Naive thymus-derived CD4-positive, alpha-beta T cell (primary cell): ENCODE measurements at regions of chr1 and their contacts with region 1.

Region 1: DNA sequence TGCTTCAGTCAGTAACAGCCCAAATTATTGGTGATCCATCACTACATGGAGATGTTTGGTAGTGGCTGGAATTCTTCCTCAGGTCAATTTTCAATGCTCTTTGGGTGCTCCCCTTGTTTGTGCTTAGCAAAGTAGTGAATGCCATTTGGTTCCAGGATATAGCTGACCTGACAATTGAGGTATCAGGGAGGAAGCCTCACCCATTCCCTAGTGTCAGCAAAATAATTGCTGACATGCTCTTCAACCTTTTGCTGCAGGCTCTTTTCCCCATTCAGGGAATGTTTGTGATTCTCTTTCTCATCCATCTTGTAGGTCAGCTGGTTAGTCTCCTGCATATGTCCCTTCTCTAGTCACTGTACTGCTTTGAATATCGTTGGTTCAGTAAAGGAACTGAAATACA is 7.1 kb upstream of the OR10K1 start:
- DNase-seq: no peak
- ATAC-seq: no peak
- H3K4me3 ChIP-seq: no peak overlapping the region
- H3K4me3 Mint-ChIP-seq: no peak overlapping the region
- H3K27ac ChIP-seq: no peak overlapping the region
- H3K27ac Mint-ChIP-seq: no peak overlapping the region
- H3K4me1 ChIP-seq: no peaks in the 10 kb centered on the region
- H3K4me1 Mint-ChIP-seq: no peaks in the 10 kb centered on the region
- H3K27me3 ChIP-seq: no peaks in the 10 kb centered on the region
- H3K27me3 Mint-ChIP-seq: peaks cover 5 to 44% (median 27%) of the 10 kb centered on the region in 5 donors

Region 2: DNA sequence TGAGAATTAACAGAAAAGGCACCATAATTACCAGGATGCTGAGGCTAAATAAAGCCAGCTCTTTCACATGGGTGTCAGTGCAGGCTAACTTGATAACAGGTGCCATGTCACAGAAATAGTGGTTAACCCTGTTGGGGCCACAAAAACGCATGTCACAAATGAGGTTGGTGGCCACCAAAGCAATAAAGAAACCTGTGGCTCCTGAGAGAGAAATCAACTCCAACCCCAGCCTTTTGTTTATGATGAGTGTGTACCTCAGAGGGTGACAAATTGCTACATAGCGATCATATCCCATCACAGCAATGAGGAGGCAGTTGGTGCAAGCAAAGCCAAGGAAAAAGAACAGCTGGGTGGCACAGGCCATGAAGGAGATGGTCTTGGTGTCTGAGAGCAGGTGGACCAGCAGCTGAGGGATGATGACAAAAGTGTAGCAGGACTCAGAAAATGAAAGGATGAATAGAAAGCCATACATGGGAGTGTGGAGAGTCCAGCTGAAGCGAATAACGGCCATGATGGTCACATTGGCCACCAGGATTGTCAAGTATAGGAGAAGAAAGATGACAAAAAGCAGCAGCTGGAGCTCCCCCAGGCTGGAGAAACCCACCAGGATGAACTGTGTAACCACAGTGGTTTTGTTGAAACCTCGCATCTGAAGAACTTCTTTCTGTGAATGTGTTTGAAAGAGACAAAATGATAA is 55.6 kb before region 1 on chr1 and contains the start of gene OR10T2:
- CTCF ChIA-PET with region 1: no interaction called
- POLR2A ChIA-PET with region 1: no interaction called
- intact Hi-C with region 1: no loop called
- DNase-seq: no peak
- ATAC-seq: no peak
- H3K4me3 ChIP-seq: no peak within 1 kb of the TSS
- H3K4me3 Mint-ChIP-seq: peak within 1 kb of the TSS in 1 of 10 donors; percentile 4
- H3K27ac ChIP-seq: no peak within 1 kb of the TSS
- H3K27ac Mint-ChIP-seq: no peak within 1 kb of the TSS
- H3K4me1 ChIP-seq: no peaks in the 10 kb centered on the region
- H3K4me1 Mint-ChIP-seq: peaks cover 0 to 13% (median 4%) of the 10 kb centered on the region in 7 donors
- H3K27me3 ChIP-seq: no peaks in the 10 kb centered on the region
- H3K27me3 Mint-ChIP-seq: peaks cover 24 to 43% (median 39%) of the 10 kb centered on the region in 5 donors
- total RNA-seq, gene OR10T2: not detected

Region 3: DNA sequence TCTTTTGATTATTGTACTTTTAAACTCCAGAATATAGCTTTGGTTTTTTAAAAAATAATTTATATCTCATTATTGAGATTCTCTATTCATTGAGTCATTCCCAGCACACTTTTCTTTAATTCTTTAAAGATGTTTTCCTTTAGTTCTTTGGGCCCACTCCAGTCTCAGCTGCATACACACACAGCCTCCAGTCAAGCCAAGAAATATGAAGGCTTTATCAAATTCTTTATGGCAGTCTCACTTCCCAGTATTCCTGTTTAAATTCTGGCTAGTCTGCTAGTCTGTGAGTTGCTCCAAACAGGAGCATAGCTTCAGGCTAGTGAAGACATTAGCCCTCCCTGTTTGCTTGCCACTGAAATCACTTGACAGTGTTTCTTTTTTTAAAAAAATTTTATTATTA is 1198.7 kb after region 1 on chr1:
- CTCF ChIA-PET with region 1: no interaction called
- POLR2A ChIA-PET with region 1: no interaction called
- intact Hi-C with region 1: loop called in 1 of 2 experiments (anchors 5 kb)
- DNase-seq: no peak
- ATAC-seq: no peak
- H3K4me3 ChIP-seq: no peak overlapping the region
- H3K4me3 Mint-ChIP-seq: no peak overlapping the region
- H3K27ac ChIP-seq: no peak overlapping the region
- H3K27ac Mint-ChIP-seq: no peak overlapping the region
- H3K4me1 ChIP-seq: no peaks in the 10 kb centered on the region
- H3K4me1 Mint-ChIP-seq: no peaks in the 10 kb centered on the region
- H3K27me3 ChIP-seq: no peaks in the 10 kb centered on the region
- H3K27me3 Mint-ChIP-seq: peaks cover 4 to 25% (median 18%) of the 10 kb centered on the region in 5 donors